AG04450 (cell line): ENCODE measurements at regions of chr1 and their contacts with region 1.

Region 1: DNA sequence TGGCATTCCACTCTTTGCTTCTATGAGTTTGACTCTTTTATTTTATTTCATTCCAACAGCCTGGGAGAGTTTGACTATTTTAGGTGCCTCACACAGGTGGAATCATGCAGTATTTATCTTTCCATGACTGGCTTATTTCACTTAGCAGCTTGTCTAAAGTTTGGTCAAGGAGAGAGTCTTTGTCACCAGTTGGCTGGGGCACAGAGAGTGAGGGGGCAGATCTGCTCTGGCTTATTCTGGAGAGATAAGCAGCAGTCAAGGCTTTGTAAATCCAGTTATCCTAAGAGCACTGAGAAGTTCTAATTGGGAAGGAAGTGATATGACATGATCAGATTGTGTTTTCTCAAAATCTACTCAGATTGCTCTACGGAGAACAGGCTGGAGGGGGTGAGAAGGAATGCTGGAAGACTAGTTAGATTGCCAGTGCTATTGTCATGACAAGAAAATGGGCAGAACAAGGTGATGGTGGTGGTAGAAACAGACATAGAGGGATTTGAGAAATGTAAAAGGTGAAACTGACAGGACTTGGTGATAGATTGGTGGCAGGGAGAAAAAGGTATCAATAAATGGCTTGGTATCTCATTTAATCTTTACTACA is 12.2 kb upstream of the CTTNBP2NL start:
- DNase-seq: no peak
- H3K4me3 ChIP-seq: no peak overlapping the region
- H3K27ac ChIP-seq: no peak overlapping the region
- H3K27me3 ChIP-seq: peaks cover 38% of the 10 kb centered on the region
- CTCF ChIP-seq: no peak

Region 2: GRCh38 chr1:112369392-112370285 is 14.2 kb before region 1 on chr1:
- CTCF ChIA-PET with region 1: interaction called, 43 read pairs
- POLR2A ChIA-PET with region 1: no interaction called
- DNase-seq: peak; percentile 44
- H3K4me3 ChIP-seq: no peak overlapping the region
- H3K27ac ChIP-seq: no peak overlapping the region
- H3K27me3 ChIP-seq: peaks cover 24% of the 10 kb centered on the region
- CTCF ChIP-seq: peak; percentile 99

Region 3: GRCh38 chr1:112603541-112603940 is 219.7 kb after region 1 on chr1:
- CTCF ChIA-PET with region 1: no interaction called
- POLR2A ChIA-PET with region 1: no interaction called
- DNase-seq: no peak
- H3K4me3 ChIP-seq: no peak overlapping the region
- H3K27ac ChIP-seq: no peak overlapping the region
- H3K27me3 ChIP-seq: no peaks in the 10 kb centered on the region
- CTCF ChIP-seq: no peak